HCT116 (cell line): ENCODE measurements at regions of chr1 and their contacts with region 1.

Region 1: DNA sequence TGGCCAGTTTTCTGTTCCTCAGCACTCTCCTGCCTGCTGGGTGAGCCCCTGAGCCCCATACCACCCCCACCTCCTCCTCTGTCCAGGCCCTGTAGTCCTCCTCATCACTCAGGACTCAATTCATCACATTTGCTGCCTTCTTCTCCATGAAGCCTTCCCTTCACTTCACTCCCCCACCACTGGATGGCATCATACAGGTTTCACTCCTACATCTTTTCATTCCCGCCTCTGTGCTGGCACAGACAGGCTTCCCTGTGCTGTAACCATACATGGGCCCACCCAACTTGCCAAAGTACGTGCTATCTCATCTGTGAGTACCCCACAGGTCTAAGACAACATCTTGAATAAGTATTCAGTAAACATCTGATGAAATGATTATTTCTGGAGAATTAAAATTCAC is 56.9 kb downstream of the SLC45A1 start:
- DNase-seq: peak; percentile 24
- ATAC-seq: peak; percentile 89
- H3K4me3 ChIP-seq: no peak overlapping the region
- H3K27ac ChIP-seq: no peak overlapping the region
- H3K4me1 ChIP-seq: peaks cover 2 to 12% of the 10 kb centered on the region in 2 experiments; a peak in 2 of 4 replicates
- H3K27me3 ChIP-seq: no peaks in the 10 kb centered on the region
- CTCF ChIP-seq: peak; percentile 53 to 76 (median 69); a peak in 5 of 6 replicates
- POLR2A ChIP-seq: no peak
- RAD21 ChIP-seq: peak; percentile 67

Region 2: GRCh38 chr1:8571200-8571984 is 196.6 kb after region 1 on chr1:
- CTCF ChIA-PET with region 1: interaction called, 3 read pairs
- POLR2A ChIA-PET with region 1: no interaction called
- RAD21 ChIA-PET with region 1: no interaction called
- intact Hi-C with region 1: loop called (anchors 10 kb)
- DNase-seq: no peak
- ATAC-seq: peak; percentile 63; the same call in 1 of the 2 replicates
- H3K4me3 ChIP-seq: no peak overlapping the region
- H3K27ac ChIP-seq: no peak overlapping the region
- H3K4me1 ChIP-seq: no peaks in the 10 kb centered on the region
- H3K27me3 ChIP-seq: no peaks in the 10 kb centered on the region
- CTCF ChIP-seq: peak; percentile 33 to 59 (median 43); a peak in 5 of 6 replicates
- POLR2A ChIP-seq: no peak
- RAD21 ChIP-seq: peak; percentile 37

Region 3: GRCh38 chr1:8671306-8671917 is 296.6 kb after region 1 on chr1:
- CTCF ChIA-PET with region 1: no interaction called
- POLR2A ChIA-PET with region 1: no interaction called
- RAD21 ChIA-PET with region 1: no interaction called
- intact Hi-C with region 1: loop called (anchors 1 kb)
- DNase-seq: peak; percentile 22
- ATAC-seq: peak; percentile 69
- H3K4me3 ChIP-seq: no peak overlapping the region
- H3K27ac ChIP-seq: no peak overlapping the region
- H3K4me1 ChIP-seq: peaks cover 4 to 9% of the 10 kb centered on the region in 2 experiments
- H3K27me3 ChIP-seq: no peaks in the 10 kb centered on the region
- CTCF ChIP-seq: peak; percentile 61 to 79 (median 75); a peak in 5 of 6 replicates
- POLR2A ChIP-seq: no peak
- RAD21 ChIP-seq: peak; percentile 74

Region 4: DNA sequence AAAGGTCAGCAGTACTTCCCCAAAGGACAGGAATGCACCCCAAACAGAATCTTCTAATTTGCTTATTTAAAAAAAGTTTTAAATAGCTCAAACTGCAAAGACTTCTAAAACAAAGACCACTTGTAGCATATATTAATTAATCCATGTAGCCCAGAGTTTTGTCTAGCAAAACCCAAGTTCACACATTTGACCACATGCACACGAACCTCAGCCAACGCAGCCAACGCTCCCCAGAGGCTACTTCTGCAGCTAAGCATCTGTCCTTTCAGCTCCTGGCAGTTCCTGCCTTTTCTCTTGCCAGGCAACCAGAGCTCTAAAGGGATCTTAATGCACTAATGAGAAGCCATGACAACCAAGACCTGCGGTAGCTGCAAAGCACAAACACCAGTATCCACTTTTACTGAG is 353.0 kb after region 1 on chr1:
- CTCF ChIA-PET with region 1: interaction called, 3 read pairs
- POLR2A ChIA-PET with region 1: no interaction called
- RAD21 ChIA-PET with region 1: interaction called in 1 of 2 experiments, 4 read pairs
- intact Hi-C with region 1: loop called (anchors 1 kb)
- DNase-seq: no peak
- ATAC-seq: no peak
- H3K4me3 ChIP-seq: no peak overlapping the region
- H3K27ac ChIP-seq: no peak overlapping the region
- H3K4me1 ChIP-seq: peaks cover 0 to 5% of the 10 kb centered on the region in 2 experiments; a peak in 2 of 4 replicates
- H3K27me3 ChIP-seq: no peaks in the 10 kb centered on the region
- CTCF ChIP-seq: no peak
- POLR2A ChIP-seq: no peak
- RAD21 ChIP-seq: no peak